MCF 10A (cell line): ENCODE measurements at regions of chr17 and their contacts with region 1.

Region 1: GRCh38 chr17:18070861-18071340 is 16.8 kb upstream of the DRG2 start:
- DNase-seq: no peak
- H3K4me3 Mint-ChIP-seq: no peak overlapping the region
- H3K27ac Mint-ChIP-seq: no peak overlapping the region
- H3K4me1 Mint-ChIP-seq: no peaks in the 10 kb centered on the region
- H3K27me3 Mint-ChIP-seq: peaks cover 12% of the 10 kb centered on the region
- CTCF ChIP-seq: no peak

Region 2: GRCh38 chr17:18059283-18059682 is 11.6 kb before region 1 on chr17:
- CTCF ChIA-PET with region 1: no interaction called
- POLR2A ChIA-PET with region 1: interaction called, 11 read pairs
- intact Hi-C with region 1: no loop called
- DNase-seq: no peak
- H3K4me3 Mint-ChIP-seq: no peak overlapping the region
- H3K27ac Mint-ChIP-seq: no peak overlapping the region
- H3K4me1 Mint-ChIP-seq: no peaks in the 10 kb centered on the region
- H3K27me3 Mint-ChIP-seq: no peaks in the 10 kb centered on the region
- CTCF ChIP-seq: no peak